Transverse colon (tissue), 4 donors: ENCODE measurements at regions of chr20 and their contacts with region 1.

Region 1: GRCh38 chr20:16072220-16072619 is 501.0 kb downstream of the KIF16B start:
- DNase-seq: no peak
- H3K4me3 ChIP-seq: no peak overlapping the region
- H3K27ac ChIP-seq: no peak overlapping the region
- H3K4me1 ChIP-seq: no peaks in the 10 kb centered on the region
- H3K27me3 ChIP-seq: no peaks in the 10 kb centered on the region
- CTCF ChIP-seq: no peak
- EP300 ChIP-seq: no peak
- POLR2A ChIP-seq: no peak

Region 2: GRCh38 chr20:16083639-16084280 is 11.5 kb after region 1 on chr20:
- in situ Hi-C with region 1: no loop called
- intact Hi-C with region 1: loop called (anchors 1 kb)
- DNase-seq: no peak
- H3K4me3 ChIP-seq: no peak overlapping the region
- H3K27ac ChIP-seq: no peak overlapping the region
- H3K4me1 ChIP-seq: peaks cover 0 to 5% (median 0%) of the 10 kb centered on the region in 4 donors
- H3K27me3 ChIP-seq: no peaks in the 10 kb centered on the region
- CTCF ChIP-seq: no peak
- EP300 ChIP-seq: no peak
- POLR2A ChIP-seq: no peak